ENCODE measurements at regions of chr20 and their contacts with region 1.

Region 1: GRCh38 chr20:25390538-25391528 is at the start of gene ABHD12:
- DNase-seq: peak; percentile 99
- H3K4me3 ChIP-seq: peak within 1 kb of the TSS; percentile 64 to 94 (median 81)
- H3K27ac ChIP-seq: peak within 1 kb of the TSS; percentile 69 to 91 (median 88)
- H3K4me1 ChIP-seq: peaks cover 0 to 27% (median 23%) of the 10 kb centered on the region in 6 donors
- H3K27me3 ChIP-seq: no peaks in the 10 kb centered on the region
- CTCF ChIP-seq: peak in 3 of 11 experiments; percentile 17 to 37 (median 33)
- POLR2A ChIP-seq: peak in 1 of 3 donors; percentile 61
- total RNA-seq, gene ABHD12: 21.5 to 36.9 (median 26.7) TPM

Region 2: GRCh38 chr20:25076731-25077609 is 313.9 kb before region 1 on chr20:
- intact Hi-C with region 1: loop called (anchors 10 kb)
- DNase-seq: no peak
- H3K4me3 ChIP-seq: peak overlapping the region in 3 of 8 donors; percentile 2 to 52 (median 23)
- H3K27ac ChIP-seq: no peak overlapping the region
- H3K4me1 ChIP-seq: peaks cover 0 to 28% (median 16%) of the 10 kb centered on the region in 6 donors
- H3K27me3 ChIP-seq: peaks cover 7 to 93% (median 63%) of the 10 kb centered on the region in 7 donors
- CTCF ChIP-seq: no peak
- POLR2A ChIP-seq: no peak

Region 3: GRCh38 chr20:25310268-25310920 is 80.4 kb before region 1 on chr20:
- intact Hi-C with region 1: loop called (anchors 10 kb)
- DNase-seq: peak; percentile 75
- H3K4me3 ChIP-seq: peak overlapping the region in 5 of 8 donors; percentile 5 to 52 (median 7)
- H3K27ac ChIP-seq: peak overlapping the region; percentile 60 to 86 (median 76)
- H3K4me1 ChIP-seq: peaks cover 8 to 51% (median 22%) of the 10 kb centered on the region in 6 donors
- H3K27me3 ChIP-seq: no peaks in the 10 kb centered on the region
- CTCF ChIP-seq: peak in 5 of 11 experiments; percentile 28 to 42 (median 32)
- POLR2A ChIP-seq: peak in 1 of 3 donors; percentile 20

Region 4: GRCh38 chr20:25336561-25337422 is 54.0 kb before region 1 on chr20:
- intact Hi-C with region 1: no loop called
- DNase-seq: no peak
- H3K4me3 ChIP-seq: no peak overlapping the region
- H3K27ac ChIP-seq: no peak overlapping the region
- H3K4me1 ChIP-seq: peaks cover 0 to 4% (median 0%) of the 10 kb centered on the region in 6 donors
- H3K27me3 ChIP-seq: no peaks in the 10 kb centered on the region
- CTCF ChIP-seq: no peak
- POLR2A ChIP-seq: no peak

Measured in spleen (tissue), 13 donors.